HEK293T (cell line): ENCODE measurements at regions of chr5 and their contacts with region 1.

Region 1: GRCh38 chr5:140054086-140054689 is 11.1 kb upstream of the NRG2 start:
- DNase-seq: no peak

Region 2: DNA sequence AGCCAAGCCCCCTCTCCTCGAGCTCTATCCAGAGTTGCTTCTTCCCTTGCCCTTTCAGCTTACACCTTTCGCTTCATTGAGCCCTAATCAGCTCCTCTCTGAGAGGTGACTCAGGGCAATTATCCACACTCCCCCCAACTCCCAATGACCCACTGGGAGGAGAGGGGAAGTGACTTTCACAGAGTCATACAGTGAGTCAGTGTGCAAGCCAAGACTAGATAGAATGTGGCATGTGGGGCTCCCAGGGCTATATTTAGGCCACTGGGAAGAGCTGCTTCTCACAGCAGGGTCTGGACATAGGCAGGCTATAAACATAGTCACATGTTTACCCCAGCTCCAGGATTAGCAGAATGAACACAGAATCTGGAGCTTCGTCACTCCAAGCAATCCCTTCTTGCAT is 68.5 kb before region 1 on chr5:
- CTCF ChIA-PET with region 1: no interaction called
- POLR2A ChIA-PET with region 1: no interaction called
- DNase-seq: no peak

Region 3: DNA sequence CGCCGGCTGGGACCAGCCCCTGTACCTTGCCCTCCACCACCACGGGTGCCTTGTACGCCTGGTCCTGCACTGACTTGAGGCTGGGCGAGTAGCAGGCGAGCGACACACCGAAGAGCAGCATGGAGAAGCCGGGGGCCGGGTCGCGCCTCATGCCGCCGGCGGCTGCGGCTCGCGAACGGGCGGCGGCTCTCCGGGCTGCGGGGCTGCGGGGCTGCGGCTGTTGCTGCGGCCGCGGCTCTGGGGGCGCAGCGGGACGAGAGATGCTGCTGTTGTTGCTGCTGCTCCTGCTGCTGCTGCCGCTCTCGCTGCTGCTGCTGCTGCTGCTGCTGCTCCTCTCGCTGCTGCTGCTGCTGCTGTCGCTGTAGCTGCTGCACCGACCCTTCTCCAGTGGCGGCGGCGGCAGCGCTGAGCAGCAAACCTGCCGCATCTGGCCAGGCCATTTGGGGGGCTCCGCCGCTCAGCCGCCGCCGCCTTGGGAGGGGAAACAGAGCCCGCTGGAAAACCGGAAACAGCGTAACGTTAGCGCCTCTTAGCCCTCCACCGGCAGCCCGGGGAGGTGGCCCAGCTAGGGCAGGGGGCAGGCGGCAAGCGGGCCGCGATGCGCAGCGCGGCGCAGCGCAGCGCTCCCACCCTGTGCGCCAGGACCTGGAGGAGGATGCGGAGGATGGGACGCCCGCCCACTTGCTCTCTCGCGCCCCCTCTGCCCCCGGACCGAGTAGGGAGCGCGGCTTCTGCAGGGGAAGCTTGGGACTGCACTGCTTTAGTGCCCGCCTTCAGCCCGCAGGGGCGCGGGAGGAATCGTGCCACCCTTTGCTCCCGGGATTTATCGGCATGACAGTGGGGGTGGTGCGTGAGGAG is 11.3 kb before region 1 on chr5 and contains the start of gene NRG2:
- CTCF ChIA-PET with region 1: interaction called, 11 read pairs
- POLR2A ChIA-PET with region 1: interaction called, 3 read pairs
- DNase-seq: peak; percentile 85